Lower lobe of right lung (tissue), 2 donors: ENCODE measurements at regions of chr2 and their contacts with region 1.

Region 1: DNA sequence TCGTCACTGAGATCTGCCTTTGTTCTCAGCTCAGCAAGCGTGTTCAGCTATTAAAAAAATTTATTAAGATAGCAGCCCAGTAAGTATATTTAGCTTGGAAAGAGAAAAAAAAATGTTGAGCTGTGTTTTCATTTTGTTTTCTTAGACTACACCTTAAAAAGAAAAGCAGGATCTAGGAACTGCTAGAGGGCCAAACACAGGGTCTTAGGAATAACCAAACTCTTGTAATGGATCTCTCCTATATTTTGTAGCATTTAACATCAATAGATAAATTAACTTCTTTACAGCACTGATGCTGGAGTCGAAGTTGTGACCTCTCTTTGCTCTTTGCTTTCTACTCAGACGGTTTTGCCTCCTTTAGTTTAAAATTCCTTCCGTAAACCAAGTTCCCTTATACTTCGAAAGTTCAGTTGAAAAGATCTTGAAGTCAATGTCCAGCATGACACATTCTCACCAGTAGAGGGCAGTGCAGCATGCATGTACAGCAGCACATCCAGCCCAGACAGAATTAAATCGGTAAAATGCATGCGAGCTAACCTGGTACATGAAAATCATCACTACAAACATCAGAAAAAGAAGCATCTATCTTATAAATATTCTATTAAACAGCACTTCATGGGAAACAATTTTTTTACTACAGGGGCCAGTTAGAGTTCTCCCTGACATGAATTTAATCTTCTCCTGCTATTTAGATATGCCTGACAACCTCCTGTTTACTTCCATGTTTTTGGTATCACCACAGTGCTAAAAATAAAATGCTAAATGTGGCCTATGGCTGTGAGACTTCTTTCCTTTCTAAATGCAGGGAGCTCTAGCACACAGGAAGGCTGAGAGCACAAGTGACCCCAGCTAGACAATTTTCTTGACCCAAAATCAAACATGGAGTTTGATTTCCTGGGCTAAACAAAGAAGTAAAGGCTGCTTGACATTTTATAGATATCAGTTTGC is 48.2 kb upstream of the MAP3K20 start:
- DNase-seq: peak; percentile 72
- ATAC-seq: peak; percentile 90
- H3K4me3 ChIP-seq: no peak overlapping the region
- H3K27ac ChIP-seq: no peak overlapping the region
- H3K4me1 ChIP-seq: peaks cover 7% of the 10 kb centered on the region
- H3K27me3 ChIP-seq: no peaks in the 10 kb centered on the region
- CTCF ChIP-seq: peak; percentile 96

Region 2: GRCh38 chr2:173210270-173211196 is 183.1 kb after region 1 on chr2:
- intact Hi-C with region 1: loop called (anchors 5 kb)
- DNase-seq: peak; percentile 45
- ATAC-seq: peak; percentile 94 to 95
- H3K4me3 ChIP-seq: no peak overlapping the region
- H3K27ac ChIP-seq: peak overlapping the region; percentile 13
- H3K4me1 ChIP-seq: peaks cover 21% of the 10 kb centered on the region
- H3K27me3 ChIP-seq: no peaks in the 10 kb centered on the region
- CTCF ChIP-seq: peak; percentile 87